Activated CD4-positive, alpha-beta memory T cell treated with anti-CD3 and anti-CD28 coated beads for 36 hours (primary cell): ENCODE measurements at regions of chrX and their contacts with region 1.

Region 1: GRCh38 chrX:9677098-9677739 is 88.4 kb downstream of the GPR143 start:
- DNase-seq: peak; percentile 43
- H3K4me3 Mint-ChIP-seq: no peak overlapping the region
- H3K27ac Mint-ChIP-seq: peak overlapping the region; percentile 14
- H3K4me1 Mint-ChIP-seq: peaks cover 20% of the 10 kb centered on the region
- H3K27me3 Mint-ChIP-seq: no peaks in the 10 kb centered on the region

Region 2: GRCh38 chrX:9285342-9285771 is 391.9 kb before region 1 on chrX:
- CTCF ChIA-PET with region 1: no interaction called
- POLR2A ChIA-PET with region 1: no interaction called
- intact Hi-C with region 1: loop called (anchors 1 kb)
- DNase-seq: peak; percentile 83
- H3K4me3 Mint-ChIP-seq: no peak overlapping the region
- H3K27ac Mint-ChIP-seq: peak overlapping the region; percentile 61
- H3K4me1 Mint-ChIP-seq: peaks cover 19% of the 10 kb centered on the region
- H3K27me3 Mint-ChIP-seq: no peaks in the 10 kb centered on the region

Region 3: GRCh38 chrX:9456250-9457074 is 220.8 kb before region 1 on chrX:
- CTCF ChIA-PET with region 1: no interaction called
- POLR2A ChIA-PET with region 1: interaction called, 5 read pairs
- intact Hi-C with region 1: loop called (anchors 2 kb)
- DNase-seq: peak; percentile 44
- H3K4me3 Mint-ChIP-seq: peak overlapping the region; percentile 41
- H3K27ac Mint-ChIP-seq: peak overlapping the region; percentile 80
- H3K4me1 Mint-ChIP-seq: peaks cover 31% of the 10 kb centered on the region
- H3K27me3 Mint-ChIP-seq: no peaks in the 10 kb centered on the region

Region 4: DNA sequence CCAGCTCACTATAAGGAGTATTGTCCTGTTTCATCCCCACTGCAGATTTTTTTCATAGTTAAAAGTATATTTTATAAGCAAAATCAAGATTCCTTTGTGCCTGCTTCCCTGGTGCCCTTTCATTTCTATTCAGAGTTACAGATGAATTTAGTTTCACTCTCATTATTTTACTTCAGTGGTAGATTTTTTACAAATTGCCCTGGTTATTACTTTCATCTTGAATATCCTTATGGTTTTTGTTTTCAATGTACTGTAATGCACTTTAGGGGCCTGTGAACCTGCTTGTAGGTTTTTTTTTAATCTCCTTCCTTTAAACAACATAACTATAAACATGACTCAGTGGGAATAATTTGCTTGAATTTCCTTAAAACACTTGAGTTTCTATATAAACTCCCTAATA is 38.3 kb before region 1 on chrX:
- CTCF ChIA-PET with region 1: no interaction called
- POLR2A ChIA-PET with region 1: interaction called, 3 read pairs
- intact Hi-C with region 1: loop called (anchors 1 kb)
- DNase-seq: no peak
- H3K4me3 Mint-ChIP-seq: no peak overlapping the region
- H3K27ac Mint-ChIP-seq: no peak overlapping the region
- H3K4me1 Mint-ChIP-seq: peaks cover 25% of the 10 kb centered on the region
- H3K27me3 Mint-ChIP-seq: no peaks in the 10 kb centered on the region

Region 5: GRCh38 chrX:9829308-9830267 is 152.4 kb after region 1 on chrX:
- CTCF ChIA-PET with region 1: no interaction called
- POLR2A ChIA-PET with region 1: no interaction called
- intact Hi-C with region 1: loop called (anchors 1 kb)
- DNase-seq: peak; percentile 68
- H3K4me3 Mint-ChIP-seq: no peak overlapping the region
- H3K27ac Mint-ChIP-seq: no peak overlapping the region
- H3K4me1 Mint-ChIP-seq: peaks cover 9% of the 10 kb centered on the region
- H3K27me3 Mint-ChIP-seq: peaks cover 38% of the 10 kb centered on the region